B cell (primary cell): ENCODE measurements at regions of chr6 and their contacts with region 1.

Region 1: GRCh38 chr6:140441256-140441655 is 1066.8 kb upstream of the CITED2 start:
- DNase-seq: peak; percentile 26
- ATAC-seq: no peak
- H3K4me3 ChIP-seq: no peak overlapping the region
- H3K4me3 Mint-ChIP-seq: no peak overlapping the region
- H3K27ac ChIP-seq: no peak overlapping the region
- H3K27ac Mint-ChIP-seq: no peak overlapping the region
- H3K4me1 ChIP-seq: no peaks in the 10 kb centered on the region
- H3K4me1 Mint-ChIP-seq: no peaks in the 10 kb centered on the region
- H3K27me3 ChIP-seq: no peaks in the 10 kb centered on the region
- H3K27me3 Mint-ChIP-seq: no peaks in the 10 kb centered on the region
- CTCF ChIP-seq: no peak

Region 2: DNA sequence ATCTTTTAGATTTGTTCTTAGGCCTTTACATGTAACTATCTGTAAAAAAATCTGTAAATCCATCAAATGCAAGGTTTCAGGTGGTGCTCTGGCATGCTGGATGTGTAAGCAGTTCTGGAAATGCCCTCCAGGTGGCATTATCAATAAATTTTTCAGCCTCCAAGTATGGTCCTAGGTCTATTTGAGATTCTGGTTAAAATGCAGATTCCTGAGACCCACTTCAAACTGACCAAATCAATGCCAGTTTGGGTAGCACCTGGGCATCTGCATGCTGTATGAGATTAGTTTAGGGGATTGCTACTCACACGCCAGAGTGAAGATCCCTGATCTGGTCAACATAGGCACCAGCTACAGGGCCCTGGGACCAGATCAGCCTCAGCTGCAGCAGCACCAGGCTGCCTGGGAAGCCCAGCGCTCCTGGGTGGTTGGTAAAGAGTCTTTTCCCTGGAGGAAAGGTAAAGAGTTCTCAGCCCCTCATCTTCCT is 559.5 kb before region 1 on chr6:
- CTCF ChIA-PET with region 1: no interaction called
- POLR2A ChIA-PET with region 1: no interaction called
- intact Hi-C with region 1: loop called (anchors 5 kb)
- DNase-seq: peak; percentile 51
- ATAC-seq: peak; percentile 36
- H3K4me3 ChIP-seq: no peak overlapping the region
- H3K4me3 Mint-ChIP-seq: no peak overlapping the region
- H3K27ac ChIP-seq: no peak overlapping the region
- H3K27ac Mint-ChIP-seq: no peak overlapping the region
- H3K4me1 ChIP-seq: peaks cover 24 to 25% of the 10 kb centered on the region in 2 donors
- H3K4me1 Mint-ChIP-seq: peaks cover 24% of the 10 kb centered on the region
- H3K27me3 ChIP-seq: no peaks in the 10 kb centered on the region
- H3K27me3 Mint-ChIP-seq: peaks cover 3% of the 10 kb centered on the region
- CTCF ChIP-seq: peak; percentile 74